Aorta (tissue), 5 donors: ENCODE measurements at regions of chr1 and their contacts with region 1.

Region 1: DNA sequence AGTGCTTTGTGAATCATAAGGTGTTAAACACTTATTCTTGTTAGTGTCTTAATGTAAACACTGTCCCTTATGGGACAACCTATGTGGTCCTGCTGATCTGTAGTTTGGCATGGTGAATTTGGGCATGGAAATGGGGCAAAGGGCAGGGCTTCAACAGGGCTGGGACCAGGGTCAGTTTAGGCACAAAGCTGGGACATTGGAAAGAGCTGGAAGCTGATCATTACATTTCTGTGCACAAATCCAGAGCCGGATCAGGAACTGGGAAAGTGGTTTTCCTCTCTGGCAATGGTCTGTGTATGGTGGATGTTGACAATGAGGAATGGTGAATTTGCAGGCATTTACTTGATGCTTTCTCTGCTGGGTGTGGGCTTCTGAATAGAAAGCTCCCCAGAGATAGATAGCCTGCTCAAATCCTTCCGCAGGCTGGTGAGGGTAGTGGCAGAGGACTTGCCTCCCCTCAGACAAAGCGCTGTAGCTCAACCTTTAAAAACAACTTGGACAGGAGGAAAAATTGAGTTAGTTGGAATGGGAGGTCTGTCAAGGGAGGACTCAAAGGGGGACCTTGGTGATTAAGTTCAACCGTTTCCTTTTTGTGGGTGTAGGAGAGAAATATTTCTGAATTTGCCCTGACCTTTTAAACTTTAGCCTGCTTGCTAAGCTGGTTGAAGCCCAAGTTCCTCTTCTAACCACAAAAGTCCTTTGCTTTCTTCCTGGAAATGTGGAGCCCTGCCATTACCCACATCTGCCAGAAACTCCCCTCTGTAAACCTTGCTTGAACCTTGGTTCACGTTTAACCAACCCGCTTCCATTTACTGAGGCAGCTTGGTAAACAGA is 35.3 kb downstream of the HLX start:
- DNase-seq: no peak
- ATAC-seq: no peak
- H3K4me3 ChIP-seq: no peak overlapping the region
- H3K27ac ChIP-seq: no peak overlapping the region
- H3K4me1 ChIP-seq: no peaks in the 10 kb centered on the region
- H3K27me3 ChIP-seq: no peaks in the 10 kb centered on the region

Region 2: GRCh38 chr1:221192055-221192454 is 277.6 kb after region 1 on chr1:
- intact Hi-C with region 1: loop called in 1 of 2 experiments (anchors 10 kb)
- DNase-seq: no peak
- ATAC-seq: no peak
- H3K4me3 ChIP-seq: no peak overlapping the region
- H3K27ac ChIP-seq: no peak overlapping the region
- H3K4me1 ChIP-seq: no peaks in the 10 kb centered on the region
- H3K27me3 ChIP-seq: no peaks in the 10 kb centered on the region

Region 3: DNA sequence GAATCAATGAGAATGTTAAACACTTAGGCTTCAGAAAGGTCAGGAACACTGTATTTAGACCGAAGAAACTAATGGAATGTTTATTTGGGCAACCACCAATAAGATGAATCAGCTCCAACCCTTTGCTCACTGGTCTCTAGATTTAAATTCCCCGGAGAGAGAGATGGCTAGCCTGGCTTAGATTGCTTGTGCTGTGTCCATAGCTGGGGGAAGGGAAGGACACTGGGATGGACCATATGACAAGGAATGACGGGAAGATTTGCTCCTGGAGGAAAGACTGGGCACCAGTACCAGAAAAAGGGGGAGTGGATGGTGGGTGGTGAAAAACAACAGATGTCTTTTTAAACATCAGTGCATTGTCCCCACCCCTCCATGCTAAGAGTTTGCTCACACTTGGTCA is 400.8 kb after region 1 on chr1:
- intact Hi-C with region 1: no loop called
- DNase-seq: no peak
- ATAC-seq: peak; percentile 75
- H3K4me3 ChIP-seq: no peak overlapping the region
- H3K27ac ChIP-seq: peak overlapping the region in 1 of 2 donors; percentile 44
- H3K4me1 ChIP-seq: peaks cover 0 to 4% of the 10 kb centered on the region in 2 donors
- H3K27me3 ChIP-seq: no peaks in the 10 kb centered on the region